ENCODE measurements at regions of chr7 and their contacts with region 1.

Region 1: GRCh38 chr7:107579885-107580715 is at the start of gene BCAP29:
- DNase-seq: peak; percentile 83
- ATAC-seq: peak; percentile 96
- H3K4me3 Mint-ChIP-seq: peak within 1 kb of the TSS; percentile 84
- H3K27ac Mint-ChIP-seq: peak within 1 kb of the TSS; percentile 88
- H3K4me1 Mint-ChIP-seq: peaks cover 18% of the 10 kb centered on the region
- H3K27me3 Mint-ChIP-seq: no peaks in the 10 kb centered on the region
- total RNA-seq, gene BCAP29: 31.4 to 38.8 TPM

Region 2: DNA sequence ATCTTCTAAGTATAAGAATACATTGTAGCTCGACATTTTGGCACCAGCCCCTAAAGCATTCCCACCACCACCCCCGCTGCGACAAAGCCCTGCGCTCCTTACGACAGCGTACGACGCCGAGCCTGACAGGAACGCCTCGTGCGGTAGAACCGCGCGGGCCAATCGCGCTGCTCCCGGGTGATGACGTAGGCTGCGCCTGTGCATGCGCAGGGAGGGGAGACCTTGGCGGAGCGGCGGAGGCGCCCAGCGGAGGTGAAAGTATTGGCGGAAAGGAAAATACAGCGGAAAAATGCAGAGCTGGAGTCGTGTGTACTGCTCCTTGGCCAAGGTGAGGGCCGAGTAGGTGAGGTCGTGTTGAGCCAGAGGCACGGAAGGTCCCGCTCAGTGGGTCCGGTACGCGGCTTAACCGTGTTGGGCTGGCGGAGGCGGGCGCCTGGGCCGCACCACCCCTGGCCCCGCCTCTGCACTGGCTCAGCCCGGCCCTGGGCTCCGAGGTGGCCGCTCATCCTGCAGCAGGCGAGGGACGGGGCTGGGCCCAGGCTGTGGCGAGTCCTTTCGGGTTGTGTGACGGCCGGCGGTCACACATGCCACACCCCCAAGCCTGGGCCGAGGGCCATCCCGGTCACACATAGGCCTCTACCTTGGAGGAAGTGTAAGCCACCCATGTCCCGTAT is 311.0 kb after region 1 on chr7 and contains the start of gene DLD:
- CTCF ChIA-PET with region 1: no interaction called
- POLR2A ChIA-PET with region 1: no interaction called
- intact Hi-C with region 1: loop called in 1 of 2 experiments (anchors 5 kb)
- DNase-seq: peak; percentile 97
- ATAC-seq: peak; percentile 98
- H3K4me3 Mint-ChIP-seq: peak within 1 kb of the TSS; percentile 79
- H3K27ac Mint-ChIP-seq: peak within 1 kb of the TSS; percentile 92
- H3K4me1 Mint-ChIP-seq: peaks cover 40% of the 10 kb centered on the region
- H3K27me3 Mint-ChIP-seq: no peaks in the 10 kb centered on the region
- total RNA-seq, gene DLD: 71.4 to 101 TPM

Measured in activated CD4-positive, alpha-beta T cell treated with anti-CD3 and anti-CD28 coated beads for 36 hours (primary cell).